ENCODE measurements at regions of chr5 and their contacts with region 1.

Region 1: GRCh38 chr5:43105369-43106289 is 15.1 kb upstream of the ZNF131 start:
- DNase-seq: peak; percentile 90
- H3K4me3 ChIP-seq: peak overlapping the region; percentile 46
- H3K27ac ChIP-seq: peak overlapping the region; percentile 67
- H3K27me3 ChIP-seq: no peaks in the 10 kb centered on the region
- CTCF ChIP-seq: peak; percentile 100

Region 2: GRCh38 chr5:43061352-43062075 is 44.1 kb before region 1 on chr5:
- CTCF ChIA-PET with region 1: interaction called, 12 read pairs
- POLR2A ChIA-PET with region 1: no interaction called
- DNase-seq: no peak
- H3K4me3 ChIP-seq: no peak overlapping the region
- H3K27ac ChIP-seq: peak overlapping the region; percentile 21
- H3K27me3 ChIP-seq: no peaks in the 10 kb centered on the region
- CTCF ChIP-seq: no peak

Region 3: GRCh38 chr5:43078986-43079355 is 26.7 kb before region 1 on chr5:
- CTCF ChIA-PET with region 1: interaction called, 27 read pairs
- POLR2A ChIA-PET with region 1: no interaction called
- DNase-seq: no peak
- H3K4me3 ChIP-seq: no peak overlapping the region
- H3K27ac ChIP-seq: no peak overlapping the region
- H3K27me3 ChIP-seq: no peaks in the 10 kb centered on the region
- CTCF ChIP-seq: no peak

Region 4: DNA sequence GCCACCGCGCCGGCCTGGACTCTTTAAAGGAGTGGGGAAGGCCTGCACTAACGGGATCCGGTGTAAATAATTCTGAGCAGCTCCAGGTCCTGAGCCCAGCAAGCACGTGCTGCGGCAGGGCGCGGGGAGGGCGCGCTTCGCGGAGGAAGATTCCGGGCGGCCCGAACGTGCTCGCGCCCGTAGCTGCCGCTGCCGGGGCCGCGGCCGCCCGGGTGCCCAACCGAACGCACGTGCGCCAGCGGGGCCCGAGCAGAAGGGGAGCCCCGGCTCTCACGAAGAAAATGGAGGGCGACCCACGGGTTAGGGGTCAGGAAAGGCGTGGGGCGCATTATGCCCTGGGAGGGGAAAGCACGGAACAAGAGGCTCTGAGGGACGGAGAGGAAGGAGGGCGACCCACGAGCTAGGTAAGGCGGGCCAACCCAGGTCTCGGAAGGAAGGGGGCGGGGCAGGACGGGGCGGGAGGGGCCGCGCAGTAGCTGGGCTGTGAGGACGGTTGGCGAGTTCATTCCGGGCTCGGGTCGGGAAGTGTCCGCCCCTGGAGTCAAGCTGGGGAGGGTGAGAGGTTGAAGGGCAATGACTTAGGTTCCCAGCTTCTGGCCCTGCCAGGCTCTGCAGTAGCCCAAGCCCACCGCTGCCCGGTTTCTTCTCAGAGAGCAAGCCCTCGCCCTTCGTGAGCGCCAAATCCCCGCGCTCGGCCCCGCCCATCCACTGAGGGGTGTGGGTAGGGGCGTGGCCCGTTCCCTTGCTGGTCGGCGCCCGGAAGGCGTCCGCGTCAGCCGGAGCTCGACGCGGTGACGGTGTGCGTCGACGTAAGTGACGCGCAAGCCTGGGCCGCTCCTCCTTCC is 15.3 kb after region 1 on chr5 and contains the start of gene ZNF131:
- CTCF ChIA-PET with region 1: interaction called, 50 read pairs
- POLR2A ChIA-PET with region 1: interaction called, 7 read pairs
- DNase-seq: peak; percentile 91
- H3K4me3 ChIP-seq: peak within 1 kb of the TSS; percentile 79
- H3K27ac ChIP-seq: peak within 1 kb of the TSS; percentile 91
- H3K27me3 ChIP-seq: no peaks in the 10 kb centered on the region
- CTCF ChIP-seq: no peak
- polyA plus RNA-seq, gene ZNF131: 30.4 and 42.5 TPM in 2 replicates